Right ventricle myocardium inferior (tissue), 1 donor: ENCODE measurements at regions of chr7 and their contacts with region 1.

Region 1: GRCh38 chr7:140640727-140641523 is at the start of gene DENND2A:
- DNase-seq: peak; percentile 88
- ATAC-seq: peak; percentile 66
- total RNA-seq, gene DENND2A: 15.0 TPM

Region 2: GRCh38 chr7:140367528-140367927 is 273.4 kb before region 1 on chr7:
- intact Hi-C with region 1: no loop called
- DNase-seq: no peak
- ATAC-seq: no peak

Region 3: DNA sequence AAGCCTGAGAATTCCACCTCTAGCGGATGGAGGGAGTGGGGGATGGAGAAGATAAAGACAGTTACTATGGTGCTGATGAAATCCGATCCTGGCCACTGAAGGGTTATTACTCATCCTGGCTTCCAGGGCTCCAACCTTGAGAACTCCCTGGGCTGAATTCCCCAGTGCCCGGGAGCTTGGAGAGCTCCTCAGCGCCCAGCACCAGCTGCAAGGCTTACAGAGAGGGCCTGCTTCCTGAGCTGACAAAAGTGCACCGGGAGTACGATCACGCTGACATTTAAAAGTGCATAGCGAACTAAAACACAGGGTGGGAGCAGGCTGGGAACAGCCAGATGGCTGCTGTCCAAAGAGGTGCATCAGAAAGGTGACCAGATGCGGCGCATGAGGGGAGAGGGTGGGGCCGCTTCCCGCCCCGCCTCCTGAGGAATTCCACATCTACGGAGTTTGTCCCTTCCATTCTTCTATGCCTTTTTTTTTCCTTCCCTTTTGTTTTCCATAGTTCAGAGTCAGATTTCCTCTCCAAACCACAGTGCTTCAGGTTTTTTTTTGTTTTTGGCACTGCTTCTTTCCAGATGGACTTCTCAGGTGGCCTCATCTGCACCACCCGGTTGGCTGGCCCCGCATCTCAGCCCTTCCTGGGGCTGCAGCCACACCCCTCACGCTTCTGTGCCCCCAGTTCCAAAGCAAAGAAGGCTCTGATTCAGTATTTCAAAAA is 99.3 kb before region 1 on chr7:
- intact Hi-C with region 1: loop called (anchors 5 kb)
- DNase-seq: no peak
- ATAC-seq: peak; percentile 81

Region 4: GRCh38 chr7:140596519-140597427 is 44.2 kb before region 1 on chr7:
- intact Hi-C with region 1: loop called (anchors 5 kb)
- DNase-seq: no peak
- ATAC-seq: no peak